CD4-positive, alpha-beta T cell (primary cell): ENCODE measurements at regions of chr7 and their contacts with region 1.

Region 1: GRCh38 chr7:116211006-116211912 is 920 bp downstream of the TES start:
- DNase-seq: peak; percentile 64 to 93 (median 76)
- ATAC-seq: peak; percentile 79
- H3K4me3 ChIP-seq: peak overlapping the region; percentile 62
- H3K4me3 Mint-ChIP-seq: peak overlapping the region; percentile 98
- H3K27ac ChIP-seq: peak overlapping the region; percentile 79 to 93
- H3K27ac Mint-ChIP-seq: peak overlapping the region; percentile 99
- H3K4me1 ChIP-seq: peaks cover 22% of the 10 kb centered on the region
- H3K4me1 Mint-ChIP-seq: peaks cover 64% of the 10 kb centered on the region
- H3K27me3 ChIP-seq: no peaks in the 10 kb centered on the region
- H3K27me3 Mint-ChIP-seq: no peaks in the 10 kb centered on the region
- CTCF ChIP-seq: no peak

Region 2: DNA sequence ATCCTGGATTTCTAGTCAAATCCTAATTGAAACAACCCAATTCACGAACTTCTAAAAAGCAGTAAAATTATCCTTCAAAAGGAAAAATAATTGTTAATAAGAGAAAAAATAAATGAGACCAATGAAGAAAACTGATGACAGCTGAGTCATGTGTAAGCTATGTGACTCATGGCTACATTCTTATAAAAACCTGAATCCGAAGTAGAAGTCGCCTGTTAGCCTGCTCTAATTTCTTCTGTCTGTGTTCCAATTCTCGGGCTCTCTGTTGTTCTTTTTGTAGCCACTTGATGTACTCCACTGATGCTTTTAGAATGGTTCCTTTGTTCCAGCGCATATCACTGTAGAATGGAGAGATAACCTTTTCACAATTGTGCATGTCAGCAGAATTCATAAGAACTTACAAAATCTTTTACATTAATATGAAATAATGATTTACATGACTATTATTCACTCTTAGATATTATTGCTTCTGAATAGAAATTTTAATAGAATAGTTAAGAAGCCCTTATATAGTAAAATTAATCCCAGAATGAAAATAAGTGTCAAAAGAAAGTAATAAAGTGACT is 269.5 kb before region 1 on chr7:
- CTCF ChIA-PET with region 1: no interaction called
- POLR2A ChIA-PET with region 1: no interaction called
- intact Hi-C with region 1: no loop called
- DNase-seq: no peak
- ATAC-seq: no peak
- H3K4me3 ChIP-seq: no peak overlapping the region
- H3K4me3 Mint-ChIP-seq: no peak overlapping the region
- H3K27ac ChIP-seq: no peak overlapping the region
- H3K27ac Mint-ChIP-seq: no peak overlapping the region
- H3K4me1 ChIP-seq: no peaks in the 10 kb centered on the region
- H3K4me1 Mint-ChIP-seq: no peaks in the 10 kb centered on the region
- H3K27me3 ChIP-seq: no peaks in the 10 kb centered on the region
- H3K27me3 Mint-ChIP-seq: no peaks in the 10 kb centered on the region
- CTCF ChIP-seq: no peak

Region 3: DNA sequence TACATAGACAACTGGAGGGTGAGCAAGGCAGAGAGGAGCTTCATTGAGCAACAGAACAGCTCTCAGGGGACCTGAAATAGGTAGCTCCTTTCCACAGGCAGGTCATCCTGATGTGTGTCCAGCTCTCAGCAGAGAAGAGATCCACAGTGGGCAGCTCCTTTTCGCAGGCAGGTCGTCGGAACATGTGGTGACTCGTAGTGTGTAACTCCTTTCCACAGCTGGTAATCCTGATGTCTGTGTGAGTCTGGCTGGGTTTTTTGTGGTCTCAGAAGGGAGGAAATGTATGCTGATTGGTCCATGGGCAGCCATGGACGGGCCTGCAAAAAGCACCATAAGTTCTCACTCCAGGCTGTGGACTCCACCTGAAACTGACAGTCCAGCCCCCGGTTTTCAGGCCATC is 25.3 kb before region 1 on chr7:
- CTCF ChIA-PET with region 1: interaction called, 27 read pairs
- POLR2A ChIA-PET with region 1: interaction called, 40 read pairs
- intact Hi-C with region 1: loop called in 1 of 2 experiments (anchors 2 kb)
- DNase-seq: no peak
- ATAC-seq: no peak
- H3K4me3 ChIP-seq: no peak overlapping the region
- H3K4me3 Mint-ChIP-seq: no peak overlapping the region
- H3K27ac ChIP-seq: no peak overlapping the region
- H3K27ac Mint-ChIP-seq: no peak overlapping the region
- H3K4me1 ChIP-seq: peaks cover 3% of the 10 kb centered on the region
- H3K4me1 Mint-ChIP-seq: peaks cover 4% of the 10 kb centered on the region
- H3K27me3 ChIP-seq: no peaks in the 10 kb centered on the region
- H3K27me3 Mint-ChIP-seq: no peaks in the 10 kb centered on the region
- CTCF ChIP-seq: no peak

Region 4: DNA sequence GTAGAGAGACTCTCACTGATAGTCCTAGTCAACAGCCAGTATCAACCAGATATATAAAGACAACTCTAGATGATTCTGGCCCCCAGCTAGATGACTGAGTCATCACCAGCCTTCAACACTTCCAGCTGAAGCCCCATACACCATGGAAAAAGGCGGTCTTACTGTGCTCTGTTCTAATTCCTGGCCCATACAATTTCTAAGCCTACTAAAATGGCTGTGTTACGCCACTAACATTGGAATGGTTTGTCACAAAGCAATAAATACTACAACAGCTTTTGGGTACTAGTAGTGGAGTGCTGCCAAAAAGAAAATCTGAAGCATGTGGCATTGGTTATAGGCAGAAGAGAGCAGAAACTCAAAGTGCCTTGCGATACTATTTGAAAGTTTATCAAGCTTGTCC is 13.9 kb before region 1 on chr7:
- CTCF ChIA-PET with region 1: interaction called, 5 read pairs
- POLR2A ChIA-PET with region 1: interaction called, 35 read pairs
- intact Hi-C with region 1: no loop called
- DNase-seq: no peak
- ATAC-seq: no peak
- H3K4me3 ChIP-seq: no peak overlapping the region
- H3K4me3 Mint-ChIP-seq: no peak overlapping the region
- H3K27ac ChIP-seq: no peak overlapping the region
- H3K27ac Mint-ChIP-seq: no peak overlapping the region
- H3K4me1 ChIP-seq: no peaks in the 10 kb centered on the region
- H3K4me1 Mint-ChIP-seq: no peaks in the 10 kb centered on the region
- H3K27me3 ChIP-seq: no peaks in the 10 kb centered on the region
- H3K27me3 Mint-ChIP-seq: no peaks in the 10 kb centered on the region
- CTCF ChIP-seq: no peak

Region 5: GRCh38 chr7:116224492-116225098 is 13.3 kb after region 1 on chr7:
- CTCF ChIA-PET with region 1: interaction called, 3 read pairs
- POLR2A ChIA-PET with region 1: interaction called, 117 read pairs
- intact Hi-C with region 1: loop called in 1 of 2 experiments (anchors 2 kb)
- DNase-seq: peak in 2 of 14 experiments; percentile 58 to 60
- ATAC-seq: peak; percentile 49
- H3K4me3 ChIP-seq: peak overlapping the region; percentile 19
- H3K4me3 Mint-ChIP-seq: peak overlapping the region; percentile 61
- H3K27ac ChIP-seq: no peak overlapping the region
- H3K27ac Mint-ChIP-seq: peak overlapping the region; percentile 73
- H3K4me1 ChIP-seq: peaks cover 44% of the 10 kb centered on the region
- H3K4me1 Mint-ChIP-seq: peaks cover 92% of the 10 kb centered on the region
- H3K27me3 ChIP-seq: no peaks in the 10 kb centered on the region
- H3K27me3 Mint-ChIP-seq: no peaks in the 10 kb centered on the region
- CTCF ChIP-seq: no peak

Region 6: GRCh38 chr7:116953727-116954442 is 742.6 kb after region 1 on chr7:
- CTCF ChIA-PET with region 1: no interaction called
- POLR2A ChIA-PET with region 1: interaction called, 3 read pairs
- intact Hi-C with region 1: loop called in 1 of 2 experiments (anchors 5 kb)
- DNase-seq: peak in 9 of 14 experiments; percentile 1 to 84 (median 36)
- ATAC-seq: peak; percentile 64
- H3K4me3 ChIP-seq: peak overlapping the region; percentile 72
- H3K4me3 Mint-ChIP-seq: peak overlapping the region; percentile 98
- H3K27ac ChIP-seq: no peak overlapping the region
- H3K27ac Mint-ChIP-seq: peak overlapping the region; percentile 81
- H3K4me1 ChIP-seq: peaks cover 16% of the 10 kb centered on the region
- H3K4me1 Mint-ChIP-seq: peaks cover 31% of the 10 kb centered on the region
- H3K27me3 ChIP-seq: no peaks in the 10 kb centered on the region
- H3K27me3 Mint-ChIP-seq: no peaks in the 10 kb centered on the region
- CTCF ChIP-seq: no peak

Region 7: GRCh38 chr7:118183786-118184564 is 1972.7 kb after region 1 on chr7 and contains the start of gene LSM8:
- CTCF ChIA-PET with region 1: no interaction called
- POLR2A ChIA-PET with region 1: no interaction called
- intact Hi-C with region 1: loop called in 1 of 2 experiments (anchors 10 kb)
- DNase-seq: peak; percentile 95 to 99 (median 96)
- ATAC-seq: peak; percentile 96
- H3K4me3 ChIP-seq: peak within 1 kb of the TSS; percentile 88
- H3K4me3 Mint-ChIP-seq: peak within 1 kb of the TSS; percentile 96
- H3K27ac ChIP-seq: peak within 1 kb of the TSS; percentile 86 to 95
- H3K27ac Mint-ChIP-seq: peak within 1 kb of the TSS; percentile 96
- H3K4me1 ChIP-seq: peaks cover 13% of the 10 kb centered on the region
- H3K4me1 Mint-ChIP-seq: peaks cover 51% of the 10 kb centered on the region
- H3K27me3 ChIP-seq: no peaks in the 10 kb centered on the region
- H3K27me3 Mint-ChIP-seq: no peaks in the 10 kb centered on the region
- CTCF ChIP-seq: no peak
- total RNA-seq, gene LSM8: 47.1 to 49.4 TPM